ENCODE measurements at regions of chr16 and their contacts with region 1.

Region 1: GRCh38 chr16:3188925-3189825 is 1.2 kb downstream of the OR1F1 start:
- DNase-seq: peak; percentile 59
- ATAC-seq: peak; percentile 40
- H3K4me3 ChIP-seq: peak overlapping the region; percentile 58
- H3K27ac ChIP-seq: peak overlapping the region; percentile 14; the same call in 1 of the 2 replicates
- H3K4me1 ChIP-seq: peaks cover 2% of the 10 kb centered on the region; the same call in 1 of the 2 replicates
- H3K27me3 ChIP-seq: peaks cover 3% of the 10 kb centered on the region; the same call in 1 of the 2 replicates
- CTCF ChIP-seq: no peak
- POLR2A ChIP-seq: no peak
- RAD21 ChIP-seq: no peak

Region 2: DNA sequence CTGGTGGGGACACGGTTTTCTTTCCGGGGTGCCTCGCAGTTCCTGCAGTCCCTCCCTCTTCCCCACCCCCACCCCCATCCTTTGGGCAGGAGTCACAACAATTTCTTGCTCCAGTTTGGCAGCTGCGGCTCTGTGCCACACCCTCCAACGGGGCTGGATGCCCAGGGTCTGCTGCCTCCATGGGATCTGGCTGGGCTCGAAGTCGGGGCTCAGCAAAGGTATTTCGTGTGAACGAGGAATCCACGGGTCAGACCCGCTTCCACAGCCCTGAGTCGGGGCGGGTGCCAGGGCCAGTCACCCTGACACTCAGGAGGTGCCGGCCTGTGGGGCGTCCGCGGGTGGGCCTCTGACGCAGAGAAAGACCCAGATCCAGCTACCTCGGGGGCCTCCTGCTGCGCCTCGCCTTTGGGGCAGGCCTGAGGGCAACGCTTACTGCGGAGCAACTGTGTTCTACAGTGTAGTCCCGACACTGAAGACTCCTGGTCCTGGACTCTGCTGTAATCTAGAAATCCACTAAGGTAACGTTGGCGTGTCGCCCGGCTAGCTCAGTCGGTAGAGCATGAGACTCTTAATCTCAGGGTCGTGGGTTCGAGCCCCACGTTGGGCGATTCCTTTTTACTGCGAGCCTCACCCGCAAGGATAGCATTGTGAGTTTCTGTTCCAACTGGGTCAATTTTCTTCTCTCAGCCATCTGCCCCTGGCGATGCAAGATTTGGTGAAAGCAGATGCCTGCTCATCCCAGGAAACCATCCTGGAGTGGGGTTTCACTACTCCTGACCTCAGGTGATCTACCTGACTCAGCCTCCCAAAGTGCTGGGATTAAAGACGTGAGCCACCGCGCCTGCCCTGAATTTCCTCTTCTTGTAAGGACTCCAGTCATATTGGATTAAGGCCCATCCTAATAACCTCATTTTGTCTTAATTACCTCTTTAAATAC is 13.8 kb before region 1 on chr16:
- CTCF ChIA-PET with region 1: no interaction called
- POLR2A ChIA-PET with region 1: interaction called, 10 read pairs
- dilution Hi-C with region 1: no loop called
- in situ Hi-C with region 1: no loop called
- intact Hi-C with region 1: no loop called
- DNase-seq: peak; percentile 53
- ATAC-seq: peak; percentile 58
- H3K4me3 ChIP-seq: peak overlapping the region; percentile 20; the same call in 1 of the 2 replicates
- H3K27ac ChIP-seq: no peak overlapping the region
- H3K4me1 ChIP-seq: peaks cover 2% of the 10 kb centered on the region; the same call in 1 of the 2 replicates
- H3K27me3 ChIP-seq: peaks cover 49% of the 10 kb centered on the region
- CTCF ChIP-seq: no peak
- POLR2A ChIP-seq: no peak
- RAD21 ChIP-seq: no peak

Region 3: GRCh38 chr16:3264137-3265036 is 75.2 kb after region 1 on chr16:
- CTCF ChIA-PET with region 1: no interaction called
- POLR2A ChIA-PET with region 1: no interaction called
- dilution Hi-C with region 1: no loop called
- in situ Hi-C with region 1: no loop called
- intact Hi-C with region 1: loop called (anchors 5 kb)
- DNase-seq: peak; percentile 96
- ATAC-seq: peak; percentile 98
- H3K4me3 ChIP-seq: peak overlapping the region; percentile 77
- H3K27ac ChIP-seq: peak overlapping the region; percentile 58
- H3K4me1 ChIP-seq: 0 out of 2 replicates have a peak, but pooled peaks cover 2% of the 10 kb centered on the region
- H3K27me3 ChIP-seq: no peaks in the 10 kb centered on the region
- CTCF ChIP-seq: peak; percentile 35
- POLR2A ChIP-seq: peak; percentile 55
- RAD21 ChIP-seq: peak; percentile 25; the same call in 1 of the 2 replicates

Region 4: GRCh38 chr16:3501783-3502420 is 312.7 kb after region 1 on chr16:
- CTCF ChIA-PET with region 1: no interaction called
- POLR2A ChIA-PET with region 1: no interaction called
- dilution Hi-C with region 1: no loop called
- in situ Hi-C with region 1: no loop called
- intact Hi-C with region 1: loop called (anchors 2 kb)
- DNase-seq: no peak
- ATAC-seq: no peak
- H3K4me3 ChIP-seq: peak overlapping the region; percentile 59
- H3K27ac ChIP-seq: peak overlapping the region; percentile 23; the same call in 1 of the 2 replicates
- H3K4me1 ChIP-seq: peaks cover 5% of the 10 kb centered on the region; the same call in 1 of the 2 replicates
- H3K27me3 ChIP-seq: no peaks in the 10 kb centered on the region
- CTCF ChIP-seq: no peak
- POLR2A ChIP-seq: no peak
- RAD21 ChIP-seq: no peak

Region 5: DNA sequence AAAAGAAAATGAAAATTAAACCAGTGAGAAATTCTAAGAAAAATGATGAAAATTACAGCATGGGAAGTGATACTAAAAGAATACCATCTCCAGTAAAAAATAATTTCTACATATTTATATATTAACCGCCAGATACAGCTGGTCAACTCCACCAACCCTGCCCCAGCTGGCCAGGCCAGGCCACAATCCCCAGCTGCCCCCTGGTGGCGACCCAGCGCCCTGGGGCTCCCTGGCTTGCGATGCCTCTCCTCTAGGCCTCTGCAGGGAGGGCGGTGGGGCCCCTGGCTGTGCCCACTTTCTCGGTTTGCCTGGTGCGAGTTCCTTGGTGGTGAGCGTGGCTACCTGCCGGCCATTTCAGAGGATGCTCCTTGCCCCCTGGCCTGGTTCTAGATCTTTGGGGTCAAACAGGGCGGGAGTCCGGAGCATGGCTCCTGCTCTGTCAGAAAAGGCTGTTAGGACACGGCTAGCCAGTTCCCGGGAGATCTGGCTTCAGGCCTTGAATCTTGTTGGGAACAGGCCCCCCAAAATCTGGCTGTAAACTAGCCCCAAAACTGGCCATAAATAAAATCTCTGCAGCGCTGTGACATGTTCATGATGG is 1141.2 kb after region 1 on chr16:
- CTCF ChIA-PET with region 1: no interaction called
- POLR2A ChIA-PET with region 1: interaction called, 25 read pairs
- dilution Hi-C with region 1: no loop called
- in situ Hi-C with region 1: no loop called
- intact Hi-C with region 1: no loop called
- DNase-seq: peak; percentile 63
- ATAC-seq: peak; percentile 79
- H3K4me3 ChIP-seq: no peak overlapping the region
- H3K27ac ChIP-seq: no peak overlapping the region
- H3K4me1 ChIP-seq: peaks cover 20% of the 10 kb centered on the region
- H3K27me3 ChIP-seq: no peaks in the 10 kb centered on the region
- CTCF ChIP-seq: peak; percentile 96
- POLR2A ChIP-seq: no peak
- RAD21 ChIP-seq: peak; percentile 97

Measured in IMR-90 (cell line).